ENCODE measurements at regions of chr1 and their contacts with region 1.

Region 1: GRCh38 chr1:151254217-151255213 is at the start of gene PSMD4:
- DNase-seq: peak; percentile 93 to 97 (median 94)
- ATAC-seq: peak; percentile 100
- H3K4me3 ChIP-seq: peak within 1 kb of the TSS; percentile 33 to 71
- H3K27ac ChIP-seq: peak within 1 kb of the TSS; percentile 46 to 87 (median 72)
- H3K4me1 ChIP-seq: peaks cover 19% of the 10 kb centered on the region
- H3K27me3 ChIP-seq: no peaks in the 10 kb centered on the region
- CTCF ChIP-seq: no peak
- POLR2A ChIP-seq: peak; percentile 38 to 88 (median 79)
- total RNA-seq, gene PSMD4: 70.2 to 73.4 TPM

Region 2: GRCh38 chr1:150708595-150708994 is 545.9 kb before region 1 on chr1:
- intact Hi-C with region 1: no loop called
- DNase-seq: no peak
- ATAC-seq: no peak
- H3K4me3 ChIP-seq: no peak overlapping the region
- H3K27ac ChIP-seq: no peak overlapping the region
- H3K4me1 ChIP-seq: no peaks in the 10 kb centered on the region
- H3K27me3 ChIP-seq: no peaks in the 10 kb centered on the region
- CTCF ChIP-seq: no peak
- POLR2A ChIP-seq: no peak

Region 3: GRCh38 chr1:151199873-151200584 is 54.5 kb before region 1 on chr1:
- intact Hi-C with region 1: loop called (anchors 5 kb)
- DNase-seq: peak in 1 of 4 donors; percentile 24
- ATAC-seq: no peak
- H3K4me3 ChIP-seq: no peak overlapping the region
- H3K27ac ChIP-seq: peak overlapping the region; percentile 31 to 93 (median 91)
- H3K4me1 ChIP-seq: peaks cover 26% of the 10 kb centered on the region
- H3K27me3 ChIP-seq: no peaks in the 10 kb centered on the region
- CTCF ChIP-seq: no peak
- POLR2A ChIP-seq: no peak